ENCODE measurements at regions of chr10 and their contacts with region 1.

Region 1: GRCh38 chr10:124632064-124632531 is 112.1 kb downstream of the FAM53B start:
- DNase-seq: peak in 2 of 9 donors; percentile 36 to 51
- ATAC-seq: peak; percentile 43
- H3K4me3 ChIP-seq: no peak overlapping the region
- H3K4me3 Mint-ChIP-seq: peak overlapping the region in 1 of 10 donors; percentile 7
- H3K27ac ChIP-seq: no peak overlapping the region
- H3K27ac Mint-ChIP-seq: peak overlapping the region in 2 of 9 donors; percentile 40 to 53
- H3K4me1 ChIP-seq: peaks cover 25 to 47% of the 10 kb centered on the region in 2 donors
- H3K4me1 Mint-ChIP-seq: peaks cover 29 to 78% (median 67%) of the 10 kb centered on the region in 7 donors
- H3K27me3 ChIP-seq: no peaks in the 10 kb centered on the region
- H3K27me3 Mint-ChIP-seq: peaks cover 0 to 8% (median 0%) of the 10 kb centered on the region in 5 donors

Region 2: DNA sequence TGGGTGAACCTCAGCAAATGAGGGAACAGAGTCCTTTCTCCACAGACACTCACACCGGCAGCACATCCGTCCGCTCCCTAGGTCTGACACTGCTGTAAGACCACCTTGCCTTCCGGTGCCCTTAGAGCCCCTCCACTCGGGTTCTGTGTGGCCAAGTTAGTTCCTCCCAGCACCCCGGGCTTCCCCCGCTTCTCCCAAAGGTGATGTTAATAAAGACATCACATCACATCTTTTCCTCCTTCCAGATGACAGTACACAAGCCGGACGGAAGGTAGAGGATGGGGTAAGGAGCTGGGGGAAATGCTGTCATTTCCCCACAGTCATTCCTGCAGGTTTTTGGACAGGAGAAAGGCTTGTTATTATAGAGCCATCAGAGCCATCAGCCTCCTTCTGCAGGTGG is 255.7 kb before region 1 on chr10:
- CTCF ChIA-PET with region 1: no interaction called
- POLR2A ChIA-PET with region 1: no interaction called
- intact Hi-C with region 1: no loop called
- DNase-seq: no peak
- ATAC-seq: no peak
- H3K4me3 ChIP-seq: no peak overlapping the region
- H3K4me3 Mint-ChIP-seq: no peak overlapping the region
- H3K27ac ChIP-seq: no peak overlapping the region
- H3K27ac Mint-ChIP-seq: no peak overlapping the region
- H3K4me1 ChIP-seq: no peaks in the 10 kb centered on the region
- H3K4me1 Mint-ChIP-seq: peaks cover 0 to 6% (median 0%) of the 10 kb centered on the region in 7 donors
- H3K27me3 ChIP-seq: no peaks in the 10 kb centered on the region
- H3K27me3 Mint-ChIP-seq: peaks cover 28 to 47% (median 33%) of the 10 kb centered on the region in 5 donors

Region 3: DNA sequence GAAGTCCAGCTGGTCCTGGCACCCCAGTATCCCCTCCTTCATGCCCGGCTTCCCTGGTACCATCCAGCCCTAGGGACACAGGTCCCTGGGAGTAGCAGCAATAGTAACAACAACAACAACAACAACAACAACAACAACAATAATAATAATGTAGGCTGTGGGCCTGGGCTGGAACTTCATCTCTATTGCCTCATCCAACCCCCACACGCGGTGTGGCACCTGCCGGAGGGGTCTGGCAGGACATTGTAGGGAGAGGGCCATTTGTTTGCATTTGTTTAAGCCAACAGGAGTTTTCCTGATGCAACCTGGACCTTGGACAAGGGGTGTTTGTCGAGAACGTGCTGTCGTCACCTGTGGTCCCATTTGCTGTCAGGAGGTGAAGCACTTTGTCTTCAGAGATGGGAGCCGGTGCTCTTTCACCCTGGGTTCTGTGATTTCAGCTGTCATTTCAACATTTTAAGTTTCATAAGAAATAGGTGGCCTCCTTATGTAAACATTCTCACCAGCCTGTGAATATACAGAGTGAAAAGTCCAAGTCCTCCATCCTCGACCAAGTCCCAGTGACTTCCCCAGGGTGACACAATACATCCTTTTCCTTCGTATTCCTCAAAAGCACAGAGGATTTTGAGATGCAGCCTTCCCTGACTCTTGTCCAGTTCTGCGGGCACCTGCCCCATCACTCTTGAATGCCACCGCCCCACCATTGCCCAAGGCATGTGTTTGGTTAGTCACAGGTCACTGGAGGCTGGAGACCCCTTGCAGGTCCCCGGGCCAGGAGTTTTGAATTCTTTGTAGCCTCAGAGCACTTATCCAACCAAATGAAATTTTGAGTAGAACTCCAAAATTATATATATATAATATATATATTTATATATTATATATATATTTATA is 161.3 kb before region 1 on chr10:
- CTCF ChIA-PET with region 1: no interaction called
- POLR2A ChIA-PET with region 1: no interaction called
- intact Hi-C with region 1: no loop called
- DNase-seq: no peak
- ATAC-seq: no peak
- H3K4me3 ChIP-seq: no peak overlapping the region
- H3K4me3 Mint-ChIP-seq: no peak overlapping the region
- H3K27ac ChIP-seq: no peak overlapping the region
- H3K27ac Mint-ChIP-seq: peak overlapping the region in 1 of 9 donors; percentile 52
- H3K4me1 ChIP-seq: peaks cover 0 to 5% of the 10 kb centered on the region in 2 donors
- H3K4me1 Mint-ChIP-seq: peaks cover 5 to 20% (median 13%) of the 10 kb centered on the region in 7 donors
- H3K27me3 ChIP-seq: no peaks in the 10 kb centered on the region
- H3K27me3 Mint-ChIP-seq: no peaks in the 10 kb centered on the region

Region 4: DNA sequence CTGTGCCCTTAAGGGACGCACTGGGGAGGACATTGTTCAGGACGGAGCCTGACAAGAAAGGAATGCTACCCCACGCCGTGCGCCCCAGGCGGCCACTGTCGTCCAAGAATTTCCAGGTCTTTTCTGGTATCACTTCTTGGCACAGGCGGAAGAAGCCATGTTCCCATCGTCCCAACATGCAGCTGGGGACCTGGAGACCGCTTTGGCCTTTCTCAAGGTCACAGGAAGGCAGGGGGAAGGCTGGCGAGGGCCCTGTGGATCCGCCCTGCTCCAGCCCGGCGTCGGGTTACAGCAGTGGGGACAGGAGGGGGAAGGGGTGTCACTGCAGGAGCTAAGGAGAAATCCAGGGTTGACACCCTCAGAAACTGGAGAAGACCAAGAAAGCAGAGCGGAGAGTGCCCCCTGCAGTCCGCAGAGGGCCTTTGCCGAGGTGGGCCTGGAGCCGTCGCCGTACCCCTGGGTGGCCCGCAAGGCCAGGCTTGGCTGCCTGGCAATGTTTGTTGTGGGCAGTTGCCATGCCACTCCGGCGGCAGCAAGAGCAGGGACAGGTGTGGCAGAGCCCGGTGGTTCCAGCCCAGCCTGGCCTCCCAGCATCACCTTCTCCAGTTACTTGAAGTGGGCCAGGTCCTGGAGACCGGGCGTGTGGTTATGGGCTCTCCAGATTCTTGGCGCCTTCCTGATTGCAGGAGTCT is 66.4 kb before region 1 on chr10:
- CTCF ChIA-PET with region 1: no interaction called
- POLR2A ChIA-PET with region 1: no interaction called
- intact Hi-C with region 1: no loop called
- DNase-seq: no peak
- ATAC-seq: peak; percentile 17
- H3K4me3 ChIP-seq: no peak overlapping the region
- H3K4me3 Mint-ChIP-seq: no peak overlapping the region
- H3K27ac ChIP-seq: no peak overlapping the region
- H3K27ac Mint-ChIP-seq: no peak overlapping the region
- H3K4me1 ChIP-seq: no peaks in the 10 kb centered on the region
- H3K4me1 Mint-ChIP-seq: no peaks in the 10 kb centered on the region
- H3K27me3 ChIP-seq: no peaks in the 10 kb centered on the region
- H3K27me3 Mint-ChIP-seq: peaks cover 0 to 4% (median 0%) of the 10 kb centered on the region in 5 donors

Region 5: GRCh38 chr10:124697830-124698544 is 65.9 kb after region 1 on chr10:
- CTCF ChIA-PET with region 1: interaction called, 10 read pairs
- POLR2A ChIA-PET with region 1: interaction called, 4 read pairs
- intact Hi-C with region 1: no loop called
- DNase-seq: peak in 4 of 9 donors; percentile 12 to 50 (median 41)
- ATAC-seq: peak; percentile 68
- H3K4me3 ChIP-seq: no peak overlapping the region
- H3K4me3 Mint-ChIP-seq: peak overlapping the region in 9 of 10 donors; percentile 53 to 82 (median 73)
- H3K27ac ChIP-seq: peak overlapping the region; percentile 67
- H3K27ac Mint-ChIP-seq: peak overlapping the region; percentile 84 to 97 (median 91)
- H3K4me1 ChIP-seq: peaks cover 66 to 90% of the 10 kb centered on the region in 2 donors
- H3K4me1 Mint-ChIP-seq: peaks cover 73 to 96% (median 94%) of the 10 kb centered on the region in 7 donors
- H3K27me3 ChIP-seq: no peaks in the 10 kb centered on the region
- H3K27me3 Mint-ChIP-seq: no peaks in the 10 kb centered on the region

Measured in naive thymus-derived CD4-positive, alpha-beta T cell (primary cell).